Ascending aorta (tissue), 2 donors: ENCODE measurements at regions of chr14 and their contacts with region 1.

Region 1: GRCh38 chr14:73851644-73852382 is at the start of gene PTGR2:
- DNase-seq: peak; percentile 84 to 98
- H3K4me3 ChIP-seq: peak within 1 kb of the TSS; percentile 59 to 62
- H3K27ac ChIP-seq: peak within 1 kb of the TSS; percentile 80 to 86
- H3K4me1 ChIP-seq: peaks cover 0 to 7% of the 10 kb centered on the region in 2 donors
- H3K27me3 ChIP-seq: no peaks in the 10 kb centered on the region
- CTCF ChIP-seq: peak in 2 of 3 experiments; percentile 9 to 26
- total RNA-seq, gene PTGR2: 2.3 TPM

Region 2: GRCh38 chr14:73795972-73796371 is 55.8 kb before region 1 on chr14:
- intact Hi-C with region 1: loop called (anchors 2 kb)
- DNase-seq: no peak
- H3K4me3 ChIP-seq: no peak overlapping the region
- H3K27ac ChIP-seq: no peak overlapping the region
- H3K4me1 ChIP-seq: peaks cover 3 to 12% of the 10 kb centered on the region in 2 donors
- H3K27me3 ChIP-seq: no peaks in the 10 kb centered on the region
- CTCF ChIP-seq: no peak

Region 3: DNA sequence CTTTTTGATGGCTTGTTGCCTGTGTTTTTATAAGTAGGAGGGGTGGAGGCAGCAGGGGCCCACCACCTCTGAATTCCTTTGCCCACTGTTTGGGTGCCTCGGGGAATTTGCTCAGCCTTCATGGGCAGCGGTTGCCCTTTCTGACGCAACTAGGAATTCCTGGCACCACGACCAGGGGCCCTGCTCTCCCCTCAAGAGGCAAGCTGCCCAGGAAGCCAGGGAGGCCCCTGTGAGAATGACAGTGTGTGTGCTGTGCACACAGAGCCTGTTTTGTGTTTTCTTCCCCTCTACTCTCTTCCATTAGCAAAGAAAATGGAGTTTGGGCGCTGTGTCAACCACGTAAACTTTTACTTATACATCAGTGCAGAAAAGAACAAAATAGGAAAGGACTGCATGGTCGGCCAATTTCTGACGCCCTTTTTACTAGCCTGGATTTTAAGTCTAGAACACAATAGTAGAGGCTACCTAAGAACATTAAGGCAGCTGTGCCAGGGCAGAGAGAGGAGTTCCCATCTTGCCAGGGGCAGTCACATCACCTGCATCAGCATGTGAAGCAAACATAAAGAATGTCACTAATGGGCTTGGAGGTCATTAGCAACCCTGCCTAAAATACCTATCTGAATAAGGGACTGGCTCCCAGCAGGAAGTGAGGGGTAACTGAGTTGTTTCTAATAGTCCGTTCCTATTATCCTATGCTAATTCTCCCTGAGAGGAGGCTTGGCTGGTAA is 18.1 kb before region 1 on chr14:
- intact Hi-C with region 1: loop called (anchors 2 kb)
- DNase-seq: peak in 1 of 2 donors; percentile 64
- H3K4me3 ChIP-seq: no peak overlapping the region
- H3K27ac ChIP-seq: no peak overlapping the region
- H3K4me1 ChIP-seq: no peaks in the 10 kb centered on the region
- H3K27me3 ChIP-seq: no peaks in the 10 kb centered on the region
- CTCF ChIP-seq: no peak